ENCODE measurements at regions of chr7 and their contacts with region 1.

Region 1: DNA sequence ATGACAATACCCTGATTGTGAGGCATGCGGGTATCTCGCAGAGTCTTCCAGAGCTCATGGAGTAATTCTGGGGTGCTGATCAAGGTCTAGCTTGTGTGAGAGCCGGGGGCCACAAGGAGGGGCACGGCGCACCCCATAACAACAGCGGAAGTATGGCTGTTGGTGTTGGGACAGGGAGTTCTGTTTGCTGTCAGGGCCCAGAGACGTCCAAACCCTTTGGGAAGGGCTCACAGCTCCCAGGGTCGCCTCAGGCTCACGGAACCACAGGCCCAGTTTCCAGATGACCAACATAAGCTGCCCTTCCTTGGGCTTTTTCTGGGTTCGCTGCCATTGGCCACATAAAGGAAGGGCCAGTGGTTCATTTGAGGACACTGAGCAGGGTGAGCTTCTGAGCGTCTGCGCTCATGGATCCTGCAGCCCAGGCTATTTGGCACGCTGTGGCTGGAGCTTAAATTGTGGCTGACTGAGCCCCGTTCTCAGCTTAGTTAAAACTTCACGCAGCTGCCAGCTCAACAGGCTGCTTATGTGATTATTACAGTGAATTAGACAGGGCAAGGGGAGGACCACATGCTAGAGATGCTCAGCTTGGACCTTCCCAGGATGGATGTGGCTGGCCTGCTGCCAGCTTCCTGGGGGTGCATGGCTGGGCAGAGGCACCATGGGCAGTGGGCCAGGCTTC is 92.3 kb downstream of the DNAJB6 start:
- DNase-seq: no peak
- H3K4me3 ChIP-seq: no peak overlapping the region
- H3K27ac ChIP-seq: no peak overlapping the region
- H3K4me1 ChIP-seq: peaks cover 0 to 9% (median 5%) of the 10 kb centered on the region in 4 donors
- H3K27me3 ChIP-seq: no peaks in the 10 kb centered on the region
- CTCF ChIP-seq: no peak

Region 2: GRCh38 chr7:156192921-156193320 is 1236.2 kb before region 1 on chr7:
- intact Hi-C with region 1: loop called (anchors 10 kb)
- DNase-seq: peak in 1 of 2 donors; percentile 11
- H3K4me3 ChIP-seq: no peak overlapping the region
- H3K27ac ChIP-seq: no peak overlapping the region
- H3K4me1 ChIP-seq: no peaks in the 10 kb centered on the region
- H3K27me3 ChIP-seq: no peaks in the 10 kb centered on the region
- CTCF ChIP-seq: no peak

Region 3: GRCh38 chr7:157125376-157126223 is 303.5 kb before region 1 on chr7:
- intact Hi-C with region 1: no loop called
- DNase-seq: peak in 1 of 2 donors; percentile 53
- H3K4me3 ChIP-seq: no peak overlapping the region
- H3K27ac ChIP-seq: no peak overlapping the region
- H3K4me1 ChIP-seq: no peaks in the 10 kb centered on the region
- H3K27me3 ChIP-seq: peaks cover 0 to 16% of the 10 kb centered on the region in 2 donors
- CTCF ChIP-seq: no peak

Region 4: DNA sequence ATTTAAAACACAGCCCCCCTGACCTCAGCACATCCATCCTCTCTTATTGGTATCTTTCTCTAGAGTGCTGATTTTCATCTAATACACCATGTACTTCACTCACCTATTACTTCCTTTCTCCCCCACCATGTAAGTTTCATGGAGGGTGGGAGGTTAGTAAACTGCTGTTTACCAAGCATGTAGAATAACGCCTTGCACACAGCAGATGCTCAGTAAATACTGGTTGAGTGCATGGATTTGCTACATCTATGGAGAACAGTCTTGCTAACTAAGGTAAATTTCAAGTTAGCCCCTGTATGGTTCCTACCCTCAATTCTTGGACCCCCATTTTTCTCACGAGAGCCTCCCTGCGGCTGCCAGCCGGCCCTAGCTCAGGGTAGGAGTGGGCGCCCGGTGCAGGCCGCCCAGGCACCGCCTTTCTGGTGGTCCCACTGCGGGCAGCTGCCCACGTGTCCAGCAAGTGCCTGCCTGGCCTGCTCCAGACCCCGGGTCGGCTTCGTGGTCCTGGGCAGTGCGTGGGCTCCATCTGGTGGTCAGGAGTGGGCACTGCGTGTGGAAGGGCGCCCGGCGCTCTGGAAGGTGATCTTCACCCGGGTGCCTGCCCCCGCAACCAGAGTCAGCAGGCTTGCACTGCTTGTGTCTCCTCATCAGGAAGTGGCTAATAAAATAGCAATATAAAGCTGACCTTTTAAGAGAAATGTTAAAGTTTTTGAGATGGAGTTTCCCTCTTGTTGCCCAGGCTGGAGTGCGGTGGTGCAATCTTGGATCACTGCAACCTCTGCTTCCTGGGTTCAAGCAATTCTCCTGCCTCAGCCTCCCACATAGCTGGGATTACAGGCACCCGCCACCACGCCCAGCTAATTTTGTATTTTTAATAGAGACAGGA is 155.7 kb before region 1 on chr7:
- intact Hi-C with region 1: no loop called
- DNase-seq: peak; percentile 65 to 82
- H3K4me3 ChIP-seq: no peak overlapping the region
- H3K27ac ChIP-seq: peak overlapping the region; percentile 89 to 95
- H3K4me1 ChIP-seq: peaks cover 6 to 36% (median 30%) of the 10 kb centered on the region in 4 donors
- H3K27me3 ChIP-seq: peaks cover 0 to 8% of the 10 kb centered on the region in 2 donors
- CTCF ChIP-seq: peak; percentile 98 to 100

Region 5: DNA sequence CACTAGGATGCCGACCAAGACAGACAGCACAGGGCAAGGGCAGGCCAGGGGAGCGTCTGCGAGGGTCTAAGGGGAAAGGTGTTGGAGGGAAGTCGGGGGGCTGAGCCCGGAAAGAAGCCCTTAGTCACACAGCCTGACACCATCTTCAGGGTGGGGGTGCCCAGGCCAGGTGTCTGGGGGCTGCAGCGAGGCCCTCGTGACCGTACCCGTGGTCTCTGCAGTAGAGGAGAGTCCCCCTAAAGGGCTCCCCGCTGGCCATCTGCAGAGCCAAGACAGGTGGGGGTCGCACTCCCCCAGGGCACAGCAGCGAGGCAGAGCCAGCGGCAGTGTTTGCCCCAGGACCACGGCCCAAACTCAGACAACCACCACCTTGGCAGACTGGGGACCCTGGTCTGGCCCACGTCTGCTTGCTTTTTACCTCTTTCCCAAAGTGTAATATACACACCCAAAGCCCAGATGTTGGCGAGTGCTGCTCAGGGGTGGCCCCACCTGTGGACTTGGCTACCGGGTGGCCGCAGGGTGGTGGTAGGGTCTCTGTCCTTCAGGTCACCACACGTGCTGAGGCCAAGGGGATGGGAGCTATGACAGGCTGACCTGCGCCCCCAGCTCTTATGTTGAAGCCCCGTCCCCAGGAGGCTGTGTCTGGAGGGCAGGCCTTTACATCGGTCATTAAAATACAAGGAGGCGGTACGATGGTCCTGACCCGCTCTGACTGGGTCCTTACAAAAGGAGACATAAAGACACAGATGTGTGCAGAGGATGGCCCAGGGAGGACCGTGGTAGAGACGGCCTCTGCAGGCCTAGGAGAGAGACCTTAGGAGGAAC is 15.1 kb after region 1 on chr7:
- intact Hi-C with region 1: no loop called
- DNase-seq: peak in 1 of 2 donors; percentile 56
- H3K4me3 ChIP-seq: no peak overlapping the region
- H3K27ac ChIP-seq: no peak overlapping the region
- H3K4me1 ChIP-seq: no peaks in the 10 kb centered on the region
- H3K27me3 ChIP-seq: peaks cover 0 to 12% of the 10 kb centered on the region in 2 donors
- CTCF ChIP-seq: no peak